Lower leg skin (tissue), 4 donors: ENCODE measurements at regions of chr2 and their contacts with region 1.

Region 1: GRCh38 chr2:146457221-146457620 is 1387.6 kb upstream of the ACVR2A start:
- DNase-seq: no peak
- H3K4me3 ChIP-seq: no peak overlapping the region
- CTCF ChIP-seq: no peak
- POLR2A ChIP-seq: no peak

Region 2: DNA sequence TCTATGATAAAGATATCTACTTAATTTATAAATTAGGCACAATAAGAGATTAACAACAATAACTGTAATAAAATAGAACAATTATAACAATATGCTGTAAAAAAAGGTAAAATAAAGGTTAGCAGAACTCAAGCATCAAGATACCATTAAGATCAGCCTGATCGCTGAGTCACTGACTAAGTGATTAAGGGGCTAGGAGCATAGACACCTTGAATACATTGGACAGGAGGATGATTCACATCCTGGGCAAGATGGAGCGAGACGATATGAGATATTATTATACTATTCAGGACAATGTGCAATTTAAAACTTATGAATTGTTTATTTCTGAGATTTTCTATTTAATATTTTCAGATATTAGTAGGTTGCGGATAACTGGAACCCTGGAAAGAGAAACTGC is 659.5 kb before region 1 on chr2:
- intact Hi-C with region 1: no loop called
- DNase-seq: no peak
- H3K4me3 ChIP-seq: no peak overlapping the region
- CTCF ChIP-seq: no peak
- POLR2A ChIP-seq: no peak

Region 3: DNA sequence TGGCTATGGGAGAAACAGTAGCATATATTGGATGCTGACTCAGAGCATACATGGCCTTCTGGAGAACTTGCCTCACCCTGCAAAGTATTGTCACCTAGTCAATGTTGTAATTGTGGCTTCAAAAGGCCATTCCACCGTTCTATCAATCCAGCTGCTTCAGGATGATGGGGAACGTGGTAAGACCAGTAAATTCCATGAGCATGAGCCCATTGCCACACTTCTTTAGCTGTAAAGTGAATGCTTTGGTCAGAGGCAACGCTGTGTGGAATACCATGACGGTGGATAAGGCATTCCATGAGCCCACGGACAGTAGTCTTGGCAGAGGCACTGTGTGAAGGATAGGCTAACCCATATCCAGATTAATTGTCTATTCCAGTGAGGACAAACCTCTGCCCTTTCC is 87.5 kb after region 1 on chr2:
- intact Hi-C with region 1: no loop called
- DNase-seq: no peak
- H3K4me3 ChIP-seq: no peak overlapping the region
- CTCF ChIP-seq: no peak
- POLR2A ChIP-seq: no peak

Region 4: DNA sequence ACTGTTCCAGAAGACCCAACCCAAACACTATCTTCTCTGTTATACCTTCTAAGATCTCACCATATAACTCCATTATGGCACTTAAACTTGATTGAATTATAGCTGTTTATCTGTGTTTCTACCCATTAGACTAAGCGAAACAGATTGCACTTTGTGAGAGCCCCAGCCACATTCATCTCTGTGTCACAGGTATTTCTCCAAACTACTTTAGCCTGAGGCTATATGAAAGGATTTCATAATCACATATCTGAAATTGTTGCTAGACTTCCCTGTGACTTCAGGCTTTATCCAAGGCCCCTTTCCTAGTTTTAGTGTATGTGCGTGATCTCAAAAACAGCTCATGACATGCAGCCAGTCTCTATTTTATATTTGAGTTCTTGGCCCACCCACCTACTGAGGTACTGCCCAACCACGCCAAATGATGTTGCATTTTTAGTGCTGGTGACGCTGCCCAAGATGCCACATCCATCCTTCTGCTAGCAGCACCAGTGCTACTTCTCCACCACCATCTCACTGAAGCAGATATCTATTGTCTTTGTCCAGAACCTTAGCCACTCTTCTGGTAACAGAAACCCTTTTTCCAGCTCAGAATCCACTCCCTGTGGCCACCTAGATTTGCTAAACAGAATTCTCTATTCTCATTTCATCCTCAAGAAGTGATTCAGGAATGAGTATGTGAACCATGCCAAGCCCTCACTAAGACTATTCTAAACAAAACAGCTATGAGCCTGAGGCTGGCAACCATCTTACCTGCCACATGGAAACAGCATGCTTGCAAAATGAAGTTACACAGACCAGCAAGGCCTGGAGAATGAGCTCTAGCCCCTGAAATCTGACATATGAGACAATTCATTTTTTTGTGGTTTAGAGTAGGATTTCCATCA is 642.9 kb after region 1 on chr2:
- intact Hi-C with region 1: no loop called
- DNase-seq: no peak
- H3K4me3 ChIP-seq: no peak overlapping the region
- CTCF ChIP-seq: no peak
- POLR2A ChIP-seq: no peak

Region 5: GRCh38 chr2:147449323-147449991 is 992.2 kb after region 1 on chr2:
- intact Hi-C with region 1: loop called (anchors 5 kb)
- DNase-seq: no peak
- H3K4me3 ChIP-seq: no peak overlapping the region
- CTCF ChIP-seq: no peak
- POLR2A ChIP-seq: no peak